Activated naive CD4-positive, alpha-beta T cell treated with anti-CD3 and anti-CD28 coated beads for 36 hours (primary cell): ENCODE measurements at regions of chr9 and their contacts with region 1.

Region 1: DNA sequence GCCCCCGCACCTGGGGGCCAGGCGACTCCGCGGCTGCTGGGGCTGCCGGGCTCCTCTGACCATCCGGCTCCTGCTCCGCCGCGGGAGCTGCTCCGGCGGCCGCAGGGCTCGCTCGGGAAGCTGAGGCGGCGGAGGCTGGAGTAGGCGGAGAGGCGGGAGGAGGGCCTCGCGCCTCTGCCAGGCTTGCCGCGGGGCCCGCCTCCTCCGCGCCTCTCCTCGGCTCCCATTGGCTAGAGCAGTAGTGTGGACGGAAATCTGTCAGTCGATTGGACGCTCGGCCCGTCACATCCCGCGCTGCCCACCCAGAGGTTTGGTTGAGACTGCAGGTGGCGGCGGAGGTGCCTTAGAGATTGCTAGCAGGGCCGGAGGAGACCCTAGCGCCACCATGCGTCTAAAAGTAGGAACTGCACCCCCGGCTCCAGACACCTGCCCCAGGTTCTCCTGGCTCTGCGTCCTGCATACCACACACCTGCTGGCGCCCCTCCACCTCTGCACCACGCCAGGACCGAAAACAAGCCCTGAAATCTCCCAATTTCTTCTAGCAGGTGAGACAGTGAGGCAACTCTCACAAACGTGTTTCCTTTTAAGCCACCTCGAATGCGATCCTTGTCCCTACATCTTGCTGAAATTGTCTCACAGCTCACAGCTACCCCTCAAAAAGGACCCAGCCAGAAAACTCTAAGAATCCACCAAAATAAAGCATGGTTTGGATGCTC is at the start of gene SCAI:
- DNase-seq: peak; percentile 100
- H3K4me3 Mint-ChIP-seq: peak within 1 kb of the TSS; percentile 82
- H3K27ac Mint-ChIP-seq: peak within 1 kb of the TSS; percentile 58
- H3K4me1 Mint-ChIP-seq: peaks cover 40% of the 10 kb centered on the region
- H3K27me3 Mint-ChIP-seq: no peaks in the 10 kb centered on the region
- total RNA-seq, gene SCAI: 9.6 to 11.8 TPM

Region 2: GRCh38 chr9:124861342-124862229 is 281.9 kb before region 1 on chr9 and contains the starts of genes ARPC5L and RPL35:
- CTCF ChIA-PET with region 1: no interaction called
- intact Hi-C with region 1: loop called (anchors 1 kb)
- DNase-seq: peak; percentile 96
- H3K4me3 Mint-ChIP-seq: peak within 1 kb of the TSS; percentile 87
- H3K27ac Mint-ChIP-seq: peak within 1 kb of the TSS; percentile 95
- H3K4me1 Mint-ChIP-seq: peaks cover 46% of the 10 kb centered on the region
- H3K27me3 Mint-ChIP-seq: no peaks in the 10 kb centered on the region
- total RNA-seq, gene ARPC5L: 116 to 123 TPM
- total RNA-seq, gene RPL35: 2,701 to 2,729 TPM

Region 3: GRCh38 chr9:124894741-124895170 is 248.8 kb before region 1 on chr9:
- CTCF ChIA-PET with region 1: no interaction called
- intact Hi-C with region 1: loop called (anchors 1 kb)
- DNase-seq: peak; percentile 65
- H3K4me3 Mint-ChIP-seq: no peak overlapping the region
- H3K27ac Mint-ChIP-seq: no peak overlapping the region
- H3K4me1 Mint-ChIP-seq: peaks cover 11% of the 10 kb centered on the region
- H3K27me3 Mint-ChIP-seq: no peaks in the 10 kb centered on the region

Region 4: GRCh38 chr9:124940693-124941453 is 202.7 kb before region 1 on chr9 and contains the start of gene GOLGA1:
- CTCF ChIA-PET with region 1: interaction called, 4 read pairs
- intact Hi-C with region 1: loop called (anchors 1 kb)
- DNase-seq: peak; percentile 93
- H3K4me3 Mint-ChIP-seq: peak within 1 kb of the TSS; percentile 98
- H3K27ac Mint-ChIP-seq: peak within 1 kb of the TSS; percentile 98
- H3K4me1 Mint-ChIP-seq: peaks cover 22% of the 10 kb centered on the region
- H3K27me3 Mint-ChIP-seq: no peaks in the 10 kb centered on the region
- total RNA-seq, gene GOLGA1: 14.3 to 15.8 TPM

Region 5: GRCh38 chr9:125119643-125120286 is 23.8 kb before region 1 on chr9:
- CTCF ChIA-PET with region 1: interaction called, 9 read pairs
- intact Hi-C with region 1: loop called (anchors 1 kb)
- DNase-seq: peak; percentile 41
- H3K4me3 Mint-ChIP-seq: no peak overlapping the region
- H3K27ac Mint-ChIP-seq: no peak overlapping the region
- H3K4me1 Mint-ChIP-seq: peaks cover 39% of the 10 kb centered on the region
- H3K27me3 Mint-ChIP-seq: no peaks in the 10 kb centered on the region

Region 6: DNA sequence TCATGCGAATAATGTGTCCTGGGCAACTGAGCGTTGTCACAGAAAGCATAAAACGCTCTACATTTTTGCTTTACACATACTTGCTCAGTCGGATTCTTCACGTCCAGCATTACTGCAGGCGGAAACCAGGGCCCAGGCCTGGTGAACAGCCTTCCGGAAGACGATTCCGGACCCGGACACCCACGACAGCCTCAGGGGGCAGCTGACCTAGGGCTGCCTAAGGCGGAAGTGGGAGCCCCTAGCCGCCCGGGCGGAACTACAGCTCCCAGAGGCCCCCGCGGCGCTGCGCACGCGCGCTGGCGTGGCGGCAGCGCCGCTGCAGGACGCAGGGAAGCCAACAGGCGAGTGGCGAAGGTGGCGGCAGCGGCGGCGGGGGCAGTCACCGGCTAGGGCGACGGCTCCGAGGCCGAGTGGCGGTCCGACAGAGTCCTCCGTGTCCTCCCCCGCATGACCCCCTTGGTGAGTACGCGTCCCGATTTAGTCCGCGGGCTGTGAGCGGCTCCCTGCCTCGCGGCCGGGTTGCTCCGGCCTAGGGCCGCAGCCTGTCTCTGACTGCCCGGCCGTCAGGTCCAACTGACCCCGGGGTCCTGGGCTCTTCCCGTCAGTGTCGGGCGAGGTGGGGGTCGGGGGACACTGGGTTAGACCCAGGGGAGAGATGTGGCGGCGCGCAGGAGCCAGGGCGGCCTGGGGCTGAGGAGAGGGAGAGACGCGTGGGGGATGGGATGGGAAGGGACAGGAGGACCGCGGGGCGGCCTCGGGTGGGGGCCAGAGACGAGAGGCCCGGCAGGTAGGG is 118.2 kb after region 1 on chr9 and contains the start of gene GAPVD1:
- CTCF ChIA-PET with region 1: no interaction called
- intact Hi-C with region 1: loop called (anchors 1 kb)
- DNase-seq: peak; percentile 90
- H3K4me3 Mint-ChIP-seq: peak within 1 kb of the TSS; percentile 98
- H3K27ac Mint-ChIP-seq: peak within 1 kb of the TSS; percentile 86
- H3K4me1 Mint-ChIP-seq: peaks cover 31% of the 10 kb centered on the region
- H3K27me3 Mint-ChIP-seq: no peaks in the 10 kb centered on the region
- total RNA-seq, gene GAPVD1: 38.1 to 40.0 TPM

Region 7: DNA sequence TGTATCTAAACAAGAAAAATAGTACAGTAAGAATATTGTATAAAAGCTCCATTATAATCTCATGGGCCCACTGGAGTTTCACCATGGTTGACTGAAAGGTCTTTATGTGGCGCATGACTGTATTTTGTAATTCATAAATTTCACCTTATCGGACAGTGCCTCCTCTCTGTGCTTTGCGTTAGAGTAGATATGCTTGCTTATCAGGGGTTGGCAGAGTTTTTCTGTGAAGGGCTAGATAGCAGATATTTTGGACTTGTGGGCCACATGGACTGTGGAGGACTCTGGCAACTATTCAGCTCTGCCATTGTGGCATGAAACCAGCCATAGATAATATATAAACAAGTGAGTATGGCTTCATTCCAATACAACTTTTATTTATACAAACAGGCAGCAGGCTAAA is 141.3 kb after region 1 on chr9:
- CTCF ChIA-PET with region 1: no interaction called
- intact Hi-C with region 1: no loop called
- DNase-seq: no peak
- H3K4me3 Mint-ChIP-seq: no peak overlapping the region
- H3K27ac Mint-ChIP-seq: no peak overlapping the region
- H3K4me1 Mint-ChIP-seq: peaks cover 4% of the 10 kb centered on the region
- H3K27me3 Mint-ChIP-seq: no peaks in the 10 kb centered on the region

Region 8: GRCh38 chr9:125374443-125375309 is 231.1 kb after region 1 on chr9:
- CTCF ChIA-PET with region 1: no interaction called
- intact Hi-C with region 1: loop called (anchors 1 kb)
- DNase-seq: peak; percentile 80
- H3K4me3 Mint-ChIP-seq: peak overlapping the region; percentile 58
- H3K27ac Mint-ChIP-seq: no peak overlapping the region
- H3K4me1 Mint-ChIP-seq: peaks cover 7% of the 10 kb centered on the region
- H3K27me3 Mint-ChIP-seq: peaks cover 3% of the 10 kb centered on the region